Activated CD4-positive, alpha-beta memory T cell treated with anti-CD3 and anti-CD28 coated beads for 36 hours (primary cell): ENCODE measurements at regions of chr2 and their contacts with region 1.

Region 1: GRCh38 chr2:202870431-202871299 is 901 bp downstream of the ICA1L start:
- DNase-seq: peak; percentile 81
- H3K4me3 Mint-ChIP-seq: peak overlapping the region; percentile 88
- H3K27ac Mint-ChIP-seq: peak overlapping the region; percentile 61
- H3K4me1 Mint-ChIP-seq: peaks cover 7% of the 10 kb centered on the region
- H3K27me3 Mint-ChIP-seq: no peaks in the 10 kb centered on the region

Region 2: GRCh38 chr2:202574541-202574940 is 296.1 kb before region 1 on chr2:
- CTCF ChIA-PET with region 1: interaction called, 14 read pairs
- POLR2A ChIA-PET with region 1: no interaction called
- intact Hi-C with region 1: loop called (anchors 1 kb)
- DNase-seq: no peak
- H3K4me3 Mint-ChIP-seq: no peak overlapping the region
- H3K27ac Mint-ChIP-seq: no peak overlapping the region
- H3K4me1 Mint-ChIP-seq: no peaks in the 10 kb centered on the region
- H3K27me3 Mint-ChIP-seq: no peaks in the 10 kb centered on the region

Region 3: GRCh38 chr2:202831242-202832220 is 39.1 kb before region 1 on chr2:
- CTCF ChIA-PET with region 1: interaction called, 5 read pairs
- POLR2A ChIA-PET with region 1: interaction called, 5 read pairs
- intact Hi-C with region 1: loop called (anchors 1 kb)
- DNase-seq: peak; percentile 70
- H3K4me3 Mint-ChIP-seq: no peak overlapping the region
- H3K27ac Mint-ChIP-seq: no peak overlapping the region
- H3K4me1 Mint-ChIP-seq: peaks cover 15% of the 10 kb centered on the region
- H3K27me3 Mint-ChIP-seq: no peaks in the 10 kb centered on the region